ENCODE measurements at regions of chr2 and their contacts with region 1.

Region 1: GRCh38 chr2:20411361-20411894 is 35.4 kb upstream of the RHOB start:
- DNase-seq: peak; percentile 73
- H3K4me3 ChIP-seq: no peak overlapping the region
- H3K27ac ChIP-seq: no peak overlapping the region
- H3K4me1 ChIP-seq: no peaks in the 10 kb centered on the region
- CTCF ChIP-seq: peak; percentile 83

Region 2: GRCh38 chr2:20424300-20425290 is 13.2 kb after region 1 on chr2:
- CTCF ChIA-PET with region 1: interaction called, 13 read pairs
- POLR2A ChIA-PET with region 1: interaction called, 6 read pairs
- intact Hi-C with region 1: no loop called
- DNase-seq: peak; percentile 70
- H3K4me3 ChIP-seq: peak overlapping the region; percentile 34
- H3K27ac ChIP-seq: peak overlapping the region; percentile 28
- H3K4me1 ChIP-seq: peaks cover 20% of the 10 kb centered on the region
- CTCF ChIP-seq: no peak